Left cardiac atrium (tissue), 4 donors: ENCODE measurements at regions of chrX and their contacts with region 1.

Region 1: GRCh38 chrX:2595258-2595657 is 94.5 kb upstream of the DHRSX start:
- DNase-seq: no peak
- ATAC-seq: no peak

Region 2: DNA sequence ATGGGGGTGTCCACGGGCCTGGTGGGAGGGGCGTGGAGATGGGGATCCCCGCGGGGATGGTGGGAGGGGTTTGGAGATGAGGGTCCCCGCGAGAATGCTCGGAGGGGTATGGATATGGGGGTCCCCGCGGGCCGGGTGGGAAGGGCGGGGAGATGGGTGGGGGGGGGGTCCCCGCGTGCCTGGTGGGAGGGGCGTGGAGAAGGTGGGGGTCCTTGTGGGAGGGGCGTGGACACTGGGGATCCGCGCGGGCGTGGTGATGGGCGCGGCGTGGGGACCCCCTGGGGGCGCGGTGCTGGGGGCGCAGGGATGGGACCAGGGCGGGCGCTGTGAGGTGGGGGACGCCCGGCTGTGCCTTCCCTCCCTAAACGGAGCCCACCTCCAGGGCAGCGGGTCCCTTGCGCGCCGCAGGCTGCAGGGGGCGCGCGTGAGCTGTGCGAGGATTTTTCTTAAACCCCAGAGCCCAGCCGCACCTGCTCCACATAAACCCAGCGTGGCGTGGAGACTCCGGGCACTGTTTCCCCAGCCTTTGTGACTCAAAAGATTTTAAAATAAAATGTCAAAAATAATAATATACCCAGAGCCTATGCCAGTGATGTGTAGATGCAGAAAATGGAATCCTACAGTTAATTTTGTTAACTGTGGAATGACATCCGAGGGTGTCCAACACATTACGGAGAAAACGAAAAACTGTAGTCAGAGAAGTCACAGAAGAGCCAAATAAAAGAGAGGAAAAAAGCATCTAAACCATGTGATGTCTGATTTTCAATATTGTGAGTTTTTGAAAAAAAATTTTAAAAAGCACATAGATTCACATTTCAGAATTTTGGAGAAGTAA is 1141.1 kb before region 1 on chrX:
- intact Hi-C with region 1: loop called in 1 of 2 experiments (anchors 10 kb)
- DNase-seq: peak; percentile 87
- ATAC-seq: peak; percentile 20 to 41

Region 3: GRCh38 chrX:1649621-1650020 is 945.6 kb before region 1 on chrX:
- intact Hi-C with region 1: loop called (anchors 1 to 5 kb)
- DNase-seq: no peak
- ATAC-seq: no peak

Region 4: GRCh38 chrX:2283111-2284067 is 311.9 kb before region 1 on chrX:
- intact Hi-C with region 1: loop called in 1 of 2 experiments (anchors 10 kb)
- DNase-seq: no peak
- ATAC-seq: peak in 1 of 2 donors; percentile 65

Region 5: GRCh38 chrX:2500267-2501075 is 94.8 kb before region 1 on chrX and contains the starts of genes DHRSX and ZBED1:
- intact Hi-C with region 1: loop called in 1 of 2 experiments (anchors 10 kb)
- DNase-seq: peak; percentile 60
- ATAC-seq: peak; percentile 68 to 80
- total RNA-seq, gene DHRSX: 21.0 to 34.0 TPM
- total RNA-seq, gene ZBED1: 37.7 to 45.0 TPM

Region 6: DNA sequence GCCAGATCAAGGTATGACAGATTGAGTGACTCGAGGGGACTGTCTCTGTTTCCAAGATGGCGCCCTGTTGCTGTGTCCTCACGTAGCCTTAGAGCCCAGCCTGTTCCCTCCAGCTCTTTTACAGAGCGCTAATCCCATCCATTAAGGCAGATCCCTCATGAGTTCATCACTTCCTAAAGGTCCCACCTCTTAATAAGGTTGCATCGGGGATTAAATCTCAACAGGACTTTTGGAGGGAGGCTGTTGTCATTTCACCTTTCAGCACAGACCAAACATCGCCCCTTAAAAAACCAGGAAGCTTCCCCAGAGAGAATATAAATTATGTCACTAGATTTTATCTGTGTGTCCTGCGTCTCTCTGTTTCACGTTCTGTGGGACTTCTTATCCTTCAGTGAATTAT is 61.8 kb before region 1 on chrX:
- intact Hi-C with region 1: no loop called
- DNase-seq: no peak
- ATAC-seq: no peak